SK-N-SH (cell line): ENCODE measurements at regions of chr12 and their contacts with region 1.

Region 1: GRCh38 chr12:66107451-66107915 is 23.1 kb downstream of the LLPH start:
- DNase-seq: peak; percentile 58
- H3K4me3 ChIP-seq: no peak overlapping the region; a peak in 1 of 4 replicates
- H3K27ac ChIP-seq: peak overlapping the region; percentile 56; a peak in 2 of 4 replicates
- H3K4me1 ChIP-seq: peaks cover 0 to 9% of the 10 kb centered on the region in 2 experiments; a peak in 2 of 4 replicates
- H3K27me3 ChIP-seq: no peaks in the 10 kb centered on the region
- CTCF ChIP-seq: peak; percentile 72
- EP300 ChIP-seq: no peak
- RAD21 ChIP-seq: peak; percentile 72

Region 2: GRCh38 chr12:66119870-66120241 is 12.4 kb after region 1 on chr12:
- CTCF ChIA-PET with region 1: interaction called, 14 read pairs
- POLR2A ChIA-PET with region 1: no interaction called
- DNase-seq: no peak
- H3K4me3 ChIP-seq: no peak overlapping the region
- H3K27ac ChIP-seq: no peak overlapping the region
- H3K4me1 ChIP-seq: no peaks in the 10 kb centered on the region
- H3K27me3 ChIP-seq: no peaks in the 10 kb centered on the region
- CTCF ChIP-seq: no peak
- EP300 ChIP-seq: no peak
- RAD21 ChIP-seq: no peak

Region 3: DNA sequence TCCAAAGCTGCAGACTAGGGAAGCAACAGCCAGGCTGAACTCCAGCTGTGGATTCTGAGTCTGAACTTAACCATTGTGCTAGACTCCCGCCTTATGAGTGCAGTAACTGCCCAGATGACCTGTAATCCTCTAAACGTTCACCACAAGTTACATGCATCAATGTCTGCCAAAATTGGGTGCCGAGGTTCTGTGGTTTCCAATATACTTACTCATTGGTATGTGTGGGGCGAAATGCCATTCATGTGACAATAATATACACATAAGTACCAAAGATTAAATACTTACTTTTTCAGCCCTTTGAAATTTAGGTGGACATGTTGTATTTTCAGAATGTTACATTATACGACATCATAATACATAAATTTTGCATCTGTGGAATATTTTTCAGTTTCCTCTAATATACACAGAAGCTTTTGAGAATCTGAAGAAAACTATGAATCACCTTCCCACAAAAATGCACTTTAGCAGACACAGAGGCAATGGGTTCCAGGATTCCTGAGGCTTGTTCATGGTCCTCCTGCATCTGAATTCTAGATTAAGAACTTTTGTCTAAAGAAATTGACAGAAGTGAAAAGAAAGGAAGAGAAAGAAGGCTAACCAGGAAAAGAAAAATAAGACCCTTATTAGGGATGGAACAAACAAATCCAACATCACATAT is 539.7 kb after region 1 on chr12:
- CTCF ChIA-PET with region 1: no interaction called
- POLR2A ChIA-PET with region 1: no interaction called
- DNase-seq: no peak
- H3K4me3 ChIP-seq: no peak overlapping the region
- H3K27ac ChIP-seq: peak overlapping the region in 1 of 2 experiments; percentile 24; a peak in 1 of 4 replicates
- H3K4me1 ChIP-seq: no peaks in the 10 kb centered on the region
- H3K27me3 ChIP-seq: peaks cover 4% of the 10 kb centered on the region; the same call in 1 of the 2 replicates
- CTCF ChIP-seq: no peak
- EP300 ChIP-seq: 0 out of 4 replicates have a peak, but pooled peaks of 1 of the 2 experiments have one; percentile 21
- RAD21 ChIP-seq: no peak